ENCODE measurements at regions of chr21 and their contacts with region 1.

Region 1: GRCh38 chr21:35882791-35883240 is 177.5 kb downstream of the SETD4 start:
- DNase-seq: peak; percentile 33
- ATAC-seq: no peak
- H3K4me3 ChIP-seq: no peak overlapping the region
- H3K27ac ChIP-seq: no peak overlapping the region
- H3K4me1 ChIP-seq: no peaks in the 10 kb centered on the region
- H3K27me3 ChIP-seq: peaks cover 31% of the 10 kb centered on the region
- CTCF ChIP-seq: no peak
- POLR2A ChIP-seq: no peak
- RAD21 ChIP-seq: no peak

Region 2: GRCh38 chr21:35862969-35863368 is 19.8 kb before region 1 on chr21:
- CTCF ChIA-PET with region 1: no interaction called
- POLR2A ChIA-PET with region 1: interaction called, 18 read pairs
- dilution Hi-C with region 1: no loop called
- in situ Hi-C with region 1: no loop called
- intact Hi-C with region 1: no loop called
- DNase-seq: no peak
- ATAC-seq: no peak
- H3K4me3 ChIP-seq: no peak overlapping the region
- H3K27ac ChIP-seq: no peak overlapping the region
- H3K4me1 ChIP-seq: no peaks in the 10 kb centered on the region
- H3K27me3 ChIP-seq: peaks cover 11% of the 10 kb centered on the region
- CTCF ChIP-seq: no peak
- POLR2A ChIP-seq: no peak
- RAD21 ChIP-seq: no peak

Measured in IMR-90 (cell line).